Left lung (tissue), 14 donors: ENCODE measurements at regions of chr12 and their contacts with region 1.

Region 1: DNA sequence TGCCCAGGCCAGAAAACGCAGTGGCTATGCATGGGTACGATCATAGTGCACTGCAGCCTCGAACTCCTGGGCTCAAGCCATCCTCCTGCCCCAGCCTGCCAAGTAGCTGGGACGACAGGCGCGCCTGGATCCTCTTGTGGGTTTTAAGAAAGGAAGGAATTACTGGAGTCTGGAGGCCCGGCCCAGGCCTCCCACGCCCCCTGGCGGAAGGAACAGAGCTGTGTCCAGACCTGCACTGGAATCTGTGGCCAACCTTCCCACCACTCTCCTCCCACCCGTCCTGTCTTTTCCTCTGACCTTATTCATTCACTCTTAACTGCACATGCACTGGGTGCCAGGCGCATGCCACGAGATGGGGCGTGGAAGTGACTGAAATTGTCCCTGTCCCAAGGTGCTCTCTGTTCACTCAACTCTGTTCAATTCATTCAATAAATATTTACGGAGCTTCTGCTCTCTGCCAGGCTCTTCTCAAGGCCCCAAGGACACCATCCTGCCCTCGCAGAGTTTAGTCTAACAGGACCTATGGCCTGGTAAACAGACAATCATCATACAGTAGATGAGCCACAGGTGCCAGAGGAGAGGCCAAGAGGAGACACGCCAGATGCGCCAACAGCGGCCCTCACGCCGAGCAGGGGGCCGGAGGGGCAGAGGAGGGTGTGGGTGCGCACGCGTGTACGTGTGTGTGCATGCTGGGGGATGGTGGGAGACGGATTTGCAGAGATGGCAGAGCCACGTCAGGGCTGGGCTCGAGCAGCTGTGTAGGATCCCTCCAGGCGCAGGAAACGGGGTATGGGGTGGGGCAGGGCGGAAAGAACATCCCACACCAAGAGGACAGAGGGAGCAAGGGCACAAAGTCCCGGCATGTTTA is 13.7 kb upstream of the TMEM106C start:
- DNase-seq: peak; percentile 51 to 93 (median 82)
- ATAC-seq: peak; percentile 93
- H3K4me3 ChIP-seq: no peak overlapping the region
- H3K27ac ChIP-seq: no peak overlapping the region
- H3K4me1 ChIP-seq: peaks cover 0 to 21% of the 10 kb centered on the region in 2 donors
- H3K27me3 ChIP-seq: no peaks in the 10 kb centered on the region
- CTCF ChIP-seq: peak; percentile 85 to 90

Region 2: DNA sequence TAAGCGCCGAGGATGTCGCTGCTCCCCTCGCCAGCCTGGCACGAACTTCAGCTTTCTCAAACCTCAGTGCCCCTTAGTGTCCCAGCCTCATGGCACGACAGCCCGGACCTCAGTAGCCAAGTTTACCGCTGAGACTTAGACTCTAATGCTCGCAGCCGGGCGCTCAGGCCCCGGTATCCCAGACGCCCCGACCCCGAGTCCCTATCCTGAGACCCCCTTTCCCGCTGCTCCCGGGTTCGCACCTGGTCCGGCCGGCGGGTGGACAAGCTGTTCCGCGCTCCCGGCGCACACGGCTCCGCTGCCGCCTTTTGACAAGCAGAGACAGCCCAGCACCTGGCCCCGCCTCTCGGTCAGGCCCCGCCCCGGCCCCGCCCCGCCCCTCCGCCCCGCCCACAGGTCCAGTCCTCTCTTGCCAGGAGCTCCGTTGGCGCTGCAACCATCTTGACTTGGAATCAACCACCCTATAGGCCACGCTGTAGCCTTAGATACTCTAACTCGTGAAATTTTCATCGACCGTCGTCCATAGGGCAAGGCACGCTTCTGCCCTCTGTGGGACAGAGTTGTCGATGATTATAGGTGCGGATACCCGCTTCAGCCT is 44.9 kb before region 1 on chr12 and contains the start of gene VDR:
- intact Hi-C with region 1: loop called in 1 of 2 experiments (anchors 10 kb)
- DNase-seq: peak; percentile 32 to 95 (median 74)
- ATAC-seq: peak; percentile 82
- H3K4me3 ChIP-seq: peak within 1 kb of the TSS; percentile 62 to 72
- H3K27ac ChIP-seq: peak within 1 kb of the TSS; percentile 75 to 92
- H3K4me1 ChIP-seq: peaks cover 34 to 55% of the 10 kb centered on the region in 2 donors
- H3K27me3 ChIP-seq: peaks cover 0 to 46% of the 10 kb centered on the region in 2 donors
- CTCF ChIP-seq: no peak
- polyA plus RNA-seq, gene VDR: 1.1 to 2.2 (median 1.9) TPM